ENCODE measurements at regions of chr21 and their contacts with region 1.

Region 1: DNA sequence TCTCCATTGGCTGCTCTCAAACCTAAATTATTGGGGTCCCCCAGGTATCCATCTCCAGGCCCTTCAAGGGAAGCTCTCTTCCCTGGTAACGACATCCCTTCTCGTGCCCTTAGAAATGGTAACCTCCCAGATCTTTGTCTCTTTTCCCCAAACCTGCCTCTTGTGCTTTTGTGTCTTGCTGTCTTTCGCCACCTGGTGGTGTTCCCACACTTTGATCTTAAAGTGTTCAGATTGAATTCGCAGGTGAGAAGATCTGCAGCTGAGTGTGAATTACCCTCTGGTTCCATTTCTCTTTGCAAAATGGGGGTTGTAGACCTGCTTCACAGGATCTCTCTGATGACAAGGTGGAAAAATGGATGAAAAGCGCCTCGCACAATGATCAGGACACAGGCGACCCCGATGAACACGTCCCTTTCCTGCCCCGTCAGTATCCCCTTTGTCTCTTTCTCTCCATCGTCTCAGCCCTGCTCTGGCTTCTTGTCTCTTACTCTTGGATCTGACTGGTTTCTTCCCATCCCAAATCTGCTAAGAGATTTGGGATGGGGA is 53.1 kb downstream of the DOP1B start:
- DNase-seq: peak; percentile 83
- ATAC-seq: peak; percentile 37
- H3K4me3 ChIP-seq: peak overlapping the region; percentile 31; the same call in 1 of the 2 replicates
- H3K27ac ChIP-seq: peak overlapping the region; percentile 83
- H3K4me1 ChIP-seq: peaks cover 67% of the 10 kb centered on the region
- H3K27me3 ChIP-seq: no peaks in the 10 kb centered on the region
- CTCF ChIP-seq: peak; percentile 94

Region 2: GRCh38 chr21:36060159-36060921 is 149.4 kb before region 1 on chr21 and contains the start of gene SETD4:
- CTCF ChIA-PET with region 1: no interaction called
- POLR2A ChIA-PET with region 1: no interaction called
- intact Hi-C with region 1: loop called (anchors 10 kb)
- DNase-seq: peak; percentile 89
- ATAC-seq: peak; percentile 89
- H3K4me3 ChIP-seq: peak within 1 kb of the TSS; percentile 87
- H3K27ac ChIP-seq: peak within 1 kb of the TSS; percentile 84
- H3K4me1 ChIP-seq: peaks cover 21% of the 10 kb centered on the region
- H3K27me3 ChIP-seq: no peaks in the 10 kb centered on the region
- CTCF ChIP-seq: no peak
- total RNA-seq, gene SETD4: 12.5 and 17.0 TPM in 2 replicates

Region 3: GRCh38 chr21:36079010-36079649 is 130.6 kb before region 1 on chr21:
- CTCF ChIA-PET with region 1: no interaction called
- POLR2A ChIA-PET with region 1: no interaction called
- intact Hi-C with region 1: no loop called
- DNase-seq: no peak
- ATAC-seq: no peak
- H3K4me3 ChIP-seq: no peak overlapping the region
- H3K27ac ChIP-seq: no peak overlapping the region
- H3K4me1 ChIP-seq: peaks cover 5% of the 10 kb centered on the region; the same call in 1 of the 2 replicates
- H3K27me3 ChIP-seq: no peaks in the 10 kb centered on the region
- CTCF ChIP-seq: no peak

Region 4: DNA sequence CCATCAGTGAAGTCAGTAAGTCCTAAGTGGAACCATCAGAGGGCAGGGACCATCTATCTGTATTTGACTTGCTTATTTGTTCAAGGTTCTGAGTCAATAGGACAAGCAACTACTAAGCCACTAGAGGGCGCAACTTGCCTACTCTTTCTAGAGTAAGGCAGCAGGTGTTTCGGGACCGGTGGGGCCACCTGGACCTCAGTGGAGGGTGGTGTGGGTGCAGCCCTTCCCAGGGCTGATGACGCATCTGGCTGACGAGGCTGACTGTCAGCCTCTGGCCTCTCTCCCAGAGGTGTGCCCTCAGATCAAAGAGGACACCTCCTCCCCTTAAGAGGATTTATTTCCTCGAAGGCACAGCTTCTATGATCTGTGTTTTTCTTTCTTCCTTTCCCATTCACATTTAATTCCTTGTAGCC is 68.2 kb before region 1 on chr21:
- CTCF ChIA-PET with region 1: no interaction called
- POLR2A ChIA-PET with region 1: no interaction called
- intact Hi-C with region 1: loop called (anchors 1 kb)
- DNase-seq: peak; percentile 100
- ATAC-seq: peak; percentile 99
- H3K4me3 ChIP-seq: no peak overlapping the region
- H3K27ac ChIP-seq: peak overlapping the region; percentile 84
- H3K4me1 ChIP-seq: peaks cover 19% of the 10 kb centered on the region
- H3K27me3 ChIP-seq: no peaks in the 10 kb centered on the region
- CTCF ChIP-seq: peak; percentile 96

Region 5: GRCh38 chr21:36156339-36156814 is 53.3 kb before region 1 on chr21:
- CTCF ChIA-PET with region 1: interaction called, 8 read pairs
- POLR2A ChIA-PET with region 1: interaction called, 13 read pairs
- intact Hi-C with region 1: loop called (anchors 1 kb)
- DNase-seq: peak; percentile 99
- ATAC-seq: peak; percentile 87
- H3K4me3 ChIP-seq: peak overlapping the region; percentile 96
- H3K27ac ChIP-seq: no peak overlapping the region
- H3K4me1 ChIP-seq: peaks cover 19% of the 10 kb centered on the region
- H3K27me3 ChIP-seq: no peaks in the 10 kb centered on the region
- CTCF ChIP-seq: no peak

Region 6: DNA sequence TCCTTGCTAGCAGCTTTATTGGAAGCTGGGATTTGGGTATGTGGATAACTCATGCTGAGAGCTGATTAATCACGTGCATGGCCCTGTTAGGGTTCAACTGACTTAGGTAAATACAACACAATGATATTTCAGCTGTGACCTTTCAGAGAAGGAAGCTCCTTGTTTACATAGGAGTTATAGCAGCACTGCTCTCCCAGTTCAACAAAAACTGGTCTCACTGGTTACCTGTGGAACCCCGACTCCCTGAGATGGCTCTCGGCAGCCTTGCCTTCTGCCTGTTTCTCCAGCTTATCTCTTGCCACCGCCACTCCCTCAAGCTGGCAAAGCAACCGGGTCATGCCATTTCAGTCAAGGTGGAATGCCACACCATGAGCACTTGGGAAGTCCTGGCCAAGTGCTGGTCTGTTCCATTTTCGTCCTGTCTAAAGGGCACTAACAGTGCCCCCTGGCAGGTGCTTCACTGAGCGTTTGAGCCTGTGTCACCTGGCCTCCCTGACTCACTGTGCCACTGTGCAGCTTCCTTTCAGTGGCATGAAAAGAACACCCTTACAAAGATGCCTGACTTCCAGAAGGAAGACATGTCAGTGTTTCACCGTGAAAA is 21.5 kb before region 1 on chr21:
- CTCF ChIA-PET with region 1: no interaction called
- POLR2A ChIA-PET with region 1: interaction called, 9 read pairs
- intact Hi-C with region 1: loop called (anchors 2 kb)
- DNase-seq: peak; percentile 85
- ATAC-seq: peak; percentile 85
- H3K4me3 ChIP-seq: peak overlapping the region; percentile 50
- H3K27ac ChIP-seq: peak overlapping the region; percentile 72
- H3K4me1 ChIP-seq: peaks cover 24% of the 10 kb centered on the region
- H3K27me3 ChIP-seq: no peaks in the 10 kb centered on the region
- CTCF ChIP-seq: peak; percentile 56; the same call in 1 of the 2 replicates